Activated CD8-positive, alpha-beta T cell treated with anti-CD3 and anti-CD28 coated beads, Interleukin-2, amount 10 ng/mL, durations not matched to agents 7 days and 5 days (primary cell): ENCODE measurements at regions of chr12 and their contacts with region 1.

Region 1: DNA sequence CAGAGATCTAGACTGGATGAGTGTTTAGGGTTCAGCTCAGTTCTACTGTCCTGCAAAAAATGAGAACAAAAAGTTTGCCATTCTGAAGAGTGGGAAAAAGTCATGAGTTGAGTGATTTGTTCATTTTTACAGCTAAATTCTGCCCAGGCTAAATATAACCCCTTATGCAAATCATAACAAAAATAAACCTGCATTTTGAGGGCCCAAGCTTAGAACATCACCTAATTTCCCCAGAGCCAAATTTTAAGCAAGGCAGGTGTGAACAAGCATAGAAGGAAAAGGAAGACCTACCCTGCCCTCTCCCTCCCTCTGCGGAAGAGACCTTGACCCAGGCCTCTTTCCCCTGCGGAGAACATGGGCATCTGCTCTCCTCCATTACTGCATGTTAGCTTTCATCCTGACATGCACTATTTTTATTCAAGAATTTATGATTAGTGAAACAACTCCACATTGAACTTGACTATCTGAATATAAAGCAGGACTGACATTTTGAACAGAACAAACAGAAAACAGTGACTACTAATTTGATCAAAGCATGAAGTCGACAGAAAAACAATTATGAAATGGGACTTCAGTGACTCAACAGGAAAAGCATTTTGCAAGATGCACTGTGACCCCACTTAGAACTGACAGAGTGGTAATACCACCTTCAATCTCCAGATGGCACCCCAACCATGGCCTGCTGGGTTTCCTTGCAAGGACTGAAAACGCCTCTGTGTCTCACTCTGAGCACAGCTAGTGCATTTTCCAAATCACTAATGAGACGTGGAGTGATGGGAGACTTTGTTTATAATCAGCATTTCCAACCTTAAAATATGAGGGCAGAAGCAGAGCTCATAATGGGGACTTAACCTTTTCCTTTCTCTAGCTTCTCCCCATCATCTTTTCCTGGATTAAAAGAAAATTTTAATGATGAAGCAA is 30.9 kb upstream of the SELPLG start:
- DNase-seq: peak; percentile 90
- ATAC-seq: peak; percentile 98
- H3K4me3 Mint-ChIP-seq: no peak overlapping the region
- H3K27ac Mint-ChIP-seq: peak overlapping the region; percentile 76
- H3K4me1 Mint-ChIP-seq: peaks cover 20% of the 10 kb centered on the region
- H3K27me3 Mint-ChIP-seq: no peaks in the 10 kb centered on the region

Region 2: DNA sequence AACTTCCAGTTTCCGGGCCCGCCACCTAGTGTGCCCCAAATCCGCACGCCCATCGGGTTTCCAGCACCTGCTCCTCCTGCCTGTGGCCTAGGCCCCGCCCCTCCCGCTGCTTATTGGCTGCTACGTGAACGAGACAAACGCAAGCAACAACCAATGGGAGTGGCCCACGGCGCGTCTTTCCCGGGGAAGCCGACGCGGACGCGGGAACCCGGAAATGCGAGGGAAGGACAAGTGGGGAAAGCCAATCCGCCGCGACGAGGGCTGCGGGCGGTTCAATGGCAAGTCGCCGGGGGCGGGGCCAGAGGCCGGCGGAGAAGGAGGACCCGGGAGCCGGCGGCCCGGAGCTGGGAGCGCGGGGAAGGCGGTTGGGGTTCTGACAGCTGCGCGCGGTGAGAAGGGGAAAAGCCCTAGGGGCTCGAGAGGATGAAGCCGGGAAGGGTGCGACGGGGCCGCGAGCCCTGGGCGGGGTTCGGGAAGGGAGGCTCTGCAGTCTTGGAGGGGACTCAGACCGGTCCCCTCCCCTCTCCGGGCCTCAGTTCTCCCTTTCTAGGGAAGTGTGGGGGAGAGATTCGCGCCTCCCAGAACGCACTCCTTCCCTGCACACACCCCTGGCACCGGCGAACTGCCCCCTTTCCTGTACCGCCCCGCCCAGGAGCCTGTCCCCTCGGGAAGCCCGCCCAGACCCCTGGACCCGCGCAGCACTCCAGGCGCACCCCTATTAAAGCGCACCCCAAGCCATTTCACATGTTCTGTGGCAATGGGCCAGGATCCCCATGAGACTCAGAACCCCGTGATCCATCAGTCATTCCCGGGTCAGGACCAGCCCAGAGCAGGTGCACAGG is 149.4 kb before region 1 on chr12 and contains the start of gene FICD:
- CTCF ChIA-PET with region 1: no interaction called
- POLR2A ChIA-PET with region 1: no interaction called
- DNase-seq: peak; percentile 100
- ATAC-seq: peak; percentile 95
- H3K4me3 Mint-ChIP-seq: peak within 1 kb of the TSS; percentile 86
- H3K27ac Mint-ChIP-seq: peak within 1 kb of the TSS; percentile 91
- H3K4me1 Mint-ChIP-seq: peaks cover 27% of the 10 kb centered on the region
- H3K27me3 Mint-ChIP-seq: no peaks in the 10 kb centered on the region
- total RNA-seq, gene FICD: 4.6 to 5.2 TPM

Region 3: GRCh38 chr12:108618079-108618952 is 46.3 kb before region 1 on chr12:
- CTCF ChIA-PET with region 1: interaction called, 56 read pairs
- POLR2A ChIA-PET with region 1: no interaction called
- DNase-seq: peak; percentile 82
- ATAC-seq: peak; percentile 69
- H3K4me3 Mint-ChIP-seq: no peak overlapping the region
- H3K27ac Mint-ChIP-seq: peak overlapping the region; percentile 71
- H3K4me1 Mint-ChIP-seq: peaks cover 52% of the 10 kb centered on the region
- H3K27me3 Mint-ChIP-seq: no peaks in the 10 kb centered on the region

Region 4: GRCh38 chr12:108653082-108653516 is 11.5 kb before region 1 on chr12:
- CTCF ChIA-PET with region 1: interaction called, 16 read pairs
- POLR2A ChIA-PET with region 1: no interaction called
- DNase-seq: no peak
- ATAC-seq: no peak
- H3K4me3 Mint-ChIP-seq: no peak overlapping the region
- H3K27ac Mint-ChIP-seq: no peak overlapping the region
- H3K4me1 Mint-ChIP-seq: peaks cover 5% of the 10 kb centered on the region
- H3K27me3 Mint-ChIP-seq: no peaks in the 10 kb centered on the region

Region 5: GRCh38 chr12:108691175-108691997 is 26.8 kb after region 1 on chr12:
- CTCF ChIA-PET with region 1: interaction called, 42 read pairs
- POLR2A ChIA-PET with region 1: no interaction called
- DNase-seq: peak; percentile 84
- ATAC-seq: peak; percentile 81
- H3K4me3 Mint-ChIP-seq: peak overlapping the region; percentile 64
- H3K27ac Mint-ChIP-seq: peak overlapping the region; percentile 87
- H3K4me1 Mint-ChIP-seq: peaks cover 64% of the 10 kb centered on the region
- H3K27me3 Mint-ChIP-seq: no peaks in the 10 kb centered on the region

Region 6: GRCh38 chr12:108786450-108786849 is 121.9 kb after region 1 on chr12:
- CTCF ChIA-PET with region 1: interaction called, 10 read pairs
- POLR2A ChIA-PET with region 1: no interaction called
- DNase-seq: no peak
- ATAC-seq: no peak
- H3K4me3 Mint-ChIP-seq: no peak overlapping the region
- H3K27ac Mint-ChIP-seq: no peak overlapping the region
- H3K4me1 Mint-ChIP-seq: no peaks in the 10 kb centered on the region
- H3K27me3 Mint-ChIP-seq: no peaks in the 10 kb centered on the region

Region 7: GRCh38 chr12:109093022-109093918 is 428.7 kb after region 1 on chr12 and contains the start of gene ALKBH2:
- CTCF ChIA-PET with region 1: interaction called, 24 read pairs
- POLR2A ChIA-PET with region 1: no interaction called
- DNase-seq: peak; percentile 95
- ATAC-seq: peak; percentile 71
- H3K4me3 Mint-ChIP-seq: peak within 1 kb of the TSS; percentile 69
- H3K27ac Mint-ChIP-seq: peak within 1 kb of the TSS; percentile 79
- H3K4me1 Mint-ChIP-seq: peaks cover 32% of the 10 kb centered on the region
- H3K27me3 Mint-ChIP-seq: no peaks in the 10 kb centered on the region
- total RNA-seq, gene ALKBH2: 10.8 to 15.3 TPM